HepG2 (cell line): ENCODE measurements at regions of chr11 and their contacts with region 1.

Region 1: DNA sequence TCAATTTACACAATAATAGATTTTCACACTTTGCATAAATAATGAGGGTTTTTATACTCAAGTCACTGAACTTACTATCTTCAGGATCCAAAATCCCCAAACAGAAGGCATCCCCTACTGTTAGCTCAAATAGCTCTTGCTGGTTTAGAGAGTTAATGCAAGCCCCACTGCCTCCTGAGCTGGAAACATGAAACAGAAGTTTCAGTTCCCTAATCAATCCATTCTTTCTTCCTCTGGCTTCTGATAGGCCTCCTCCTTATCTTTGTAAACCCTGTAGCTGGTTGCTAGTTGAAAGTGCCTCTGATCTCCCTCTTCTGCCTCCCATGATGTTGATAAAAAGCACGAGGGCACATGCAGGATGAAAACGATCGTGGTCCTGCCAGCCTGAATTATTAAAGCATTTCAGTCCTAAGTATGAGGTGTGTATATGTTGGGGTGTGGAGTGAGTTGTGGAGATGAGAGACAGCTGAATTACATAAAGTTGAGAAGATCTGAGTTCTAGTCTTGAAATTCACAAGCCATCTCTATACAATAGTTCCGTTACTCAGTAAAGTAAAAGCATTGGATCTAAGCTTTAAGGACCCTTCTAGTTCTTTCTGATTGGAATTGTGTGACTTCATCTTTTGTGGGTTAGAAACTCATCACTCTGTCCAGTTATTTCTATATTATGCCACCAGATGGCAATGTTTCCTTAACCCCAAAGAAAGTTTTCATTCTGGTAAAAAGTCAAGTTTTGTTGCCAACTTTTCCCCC is 35.0 kb upstream of the EHF start:
- DNase-seq: peak; percentile 70
- ATAC-seq: peak; percentile 81
- H3K4me3 ChIP-seq: peak overlapping the region; percentile 10 to 56 (median 48); a peak in 4 of 6 replicates
- H3K27ac ChIP-seq: peak overlapping the region; percentile 51
- H3K4me1 ChIP-seq: peaks cover 40% of the 10 kb centered on the region
- H3K27me3 ChIP-seq: no peaks in the 10 kb centered on the region
- CTCF ChIP-seq: peak; percentile 77
- EP300 ChIP-seq: peak in 1 of 2 experiments; percentile 86; a peak in 1 of 4 replicates
- POLR2A ChIP-seq: no peak
- RAD21 ChIP-seq: peak; percentile 90

Region 2: DNA sequence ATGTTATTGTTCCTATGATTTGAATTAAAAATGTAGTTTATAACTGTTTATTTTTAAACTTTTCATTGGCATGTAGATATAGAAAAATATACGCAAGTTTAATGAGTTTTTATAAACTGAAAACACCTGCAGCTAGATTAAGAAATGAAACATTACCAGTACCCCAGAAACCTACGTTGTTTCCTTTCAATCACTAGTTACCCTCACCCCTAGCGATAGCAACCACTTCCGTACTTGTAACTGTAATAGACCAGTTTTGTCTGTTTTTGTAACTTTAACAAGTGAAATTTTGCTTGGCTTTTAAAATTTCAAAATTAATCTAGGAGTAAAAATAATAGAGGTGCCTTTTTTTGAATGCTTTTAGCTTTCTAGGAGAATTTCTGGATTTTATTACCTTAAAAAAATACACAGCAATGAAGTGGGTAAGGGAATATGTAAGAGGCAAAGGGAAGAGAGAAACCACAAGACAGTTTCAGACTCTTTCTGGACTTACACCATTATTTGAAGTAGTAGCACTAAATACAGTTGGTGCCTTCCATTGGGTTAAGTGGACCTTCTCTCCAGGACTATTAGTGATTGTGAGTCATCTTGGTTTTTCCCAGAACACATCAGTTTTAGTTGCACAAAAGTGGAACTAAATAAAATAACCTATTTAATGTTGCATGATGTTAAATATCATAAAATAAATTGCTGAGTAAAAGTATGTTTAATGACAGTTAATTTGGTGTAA is 499.2 kb before region 1 on chr11:
- CTCF ChIA-PET with region 1: no interaction called
- POLR2A ChIA-PET with region 1: no interaction called
- in situ Hi-C with region 1: no loop called
- intact Hi-C with region 1: no loop called
- DNase-seq: no peak
- ATAC-seq: no peak
- H3K4me3 ChIP-seq: no peak overlapping the region
- H3K27ac ChIP-seq: no peak overlapping the region
- H3K4me1 ChIP-seq: peaks cover 9% of the 10 kb centered on the region
- H3K27me3 ChIP-seq: no peaks in the 10 kb centered on the region
- CTCF ChIP-seq: no peak
- EP300 ChIP-seq: no peak
- POLR2A ChIP-seq: no peak
- RAD21 ChIP-seq: no peak

Region 3: DNA sequence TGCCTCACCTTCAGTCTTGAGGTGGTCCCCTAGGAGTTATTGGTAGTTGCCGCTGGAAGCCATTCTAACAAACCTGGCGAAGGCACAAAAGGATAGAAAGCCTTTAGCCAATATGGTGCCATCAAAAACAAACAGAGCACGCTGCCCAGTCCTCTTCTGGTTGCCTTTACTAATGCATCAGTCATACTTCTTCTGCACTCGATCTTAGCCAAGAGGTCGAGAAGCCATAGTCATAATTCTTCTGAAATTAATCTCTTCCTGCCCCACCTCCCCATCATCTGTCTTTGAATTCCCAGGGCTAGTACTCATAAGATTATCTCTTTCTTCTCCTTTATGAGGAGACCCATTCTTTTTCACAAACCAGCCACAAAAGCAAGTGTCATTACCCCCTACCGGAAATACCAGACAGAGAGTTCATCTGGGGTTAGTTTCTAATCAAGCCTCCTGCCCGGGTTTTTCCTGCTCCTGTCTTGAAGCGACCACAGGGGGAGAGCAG is 13.5 kb after region 1 on chr11:
- CTCF ChIA-PET with region 1: no interaction called
- POLR2A ChIA-PET with region 1: interaction called, 23 read pairs
- in situ Hi-C with region 1: no loop called
- intact Hi-C with region 1: no loop called
- DNase-seq: peak; percentile 79
- ATAC-seq: peak; percentile 1; the same call in 1 of the 3 replicates
- H3K4me3 ChIP-seq: peak overlapping the region; percentile 49 to 67 (median 66)
- H3K27ac ChIP-seq: peak overlapping the region; percentile 95
- H3K4me1 ChIP-seq: peaks cover 86% of the 10 kb centered on the region
- H3K27me3 ChIP-seq: no peaks in the 10 kb centered on the region
- CTCF ChIP-seq: no peak
- EP300 ChIP-seq: peak in 1 of 2 experiments; percentile 52; a peak in 1 of 4 replicates
- POLR2A ChIP-seq: no peak
- RAD21 ChIP-seq: no peak

Region 4: GRCh38 chr11:34783816-34784317 is 198.0 kb after region 1 on chr11:
- CTCF ChIA-PET with region 1: no interaction called
- POLR2A ChIA-PET with region 1: interaction called, 3 read pairs
- in situ Hi-C with region 1: no loop called
- intact Hi-C with region 1: loop called (anchors 2 kb)
- DNase-seq: peak; percentile 98
- ATAC-seq: peak; percentile 96
- H3K4me3 ChIP-seq: peak overlapping the region; percentile 2 to 38 (median 26); a peak in 4 of 6 replicates
- H3K27ac ChIP-seq: peak overlapping the region; percentile 92
- H3K4me1 ChIP-seq: peaks cover 46% of the 10 kb centered on the region
- H3K27me3 ChIP-seq: no peaks in the 10 kb centered on the region
- CTCF ChIP-seq: no peak
- EP300 ChIP-seq: peak in 1 of 2 experiments; percentile 84; a peak in 2 of 4 replicates
- POLR2A ChIP-seq: peak in 1 of 2 experiments; percentile 36; a peak in 1 of 4 replicates
- RAD21 ChIP-seq: no peak

Region 5: GRCh38 chr11:34890812-34891211 is 304.9 kb after region 1 on chr11:
- CTCF ChIA-PET with region 1: interaction called, 56 read pairs
- POLR2A ChIA-PET with region 1: no interaction called
- in situ Hi-C with region 1: loop called (anchors 5 kb)
- intact Hi-C with region 1: loop called (anchors 1 kb)
- DNase-seq: peak; percentile 59
- ATAC-seq: no peak
- H3K4me3 ChIP-seq: no peak overlapping the region
- H3K27ac ChIP-seq: no peak overlapping the region
- H3K4me1 ChIP-seq: peaks cover 22% of the 10 kb centered on the region
- H3K27me3 ChIP-seq: no peaks in the 10 kb centered on the region
- CTCF ChIP-seq: peak; percentile 61
- EP300 ChIP-seq: no peak
- POLR2A ChIP-seq: no peak
- RAD21 ChIP-seq: peak; percentile 51; the same call in 1 of the 2 replicates

Region 6: DNA sequence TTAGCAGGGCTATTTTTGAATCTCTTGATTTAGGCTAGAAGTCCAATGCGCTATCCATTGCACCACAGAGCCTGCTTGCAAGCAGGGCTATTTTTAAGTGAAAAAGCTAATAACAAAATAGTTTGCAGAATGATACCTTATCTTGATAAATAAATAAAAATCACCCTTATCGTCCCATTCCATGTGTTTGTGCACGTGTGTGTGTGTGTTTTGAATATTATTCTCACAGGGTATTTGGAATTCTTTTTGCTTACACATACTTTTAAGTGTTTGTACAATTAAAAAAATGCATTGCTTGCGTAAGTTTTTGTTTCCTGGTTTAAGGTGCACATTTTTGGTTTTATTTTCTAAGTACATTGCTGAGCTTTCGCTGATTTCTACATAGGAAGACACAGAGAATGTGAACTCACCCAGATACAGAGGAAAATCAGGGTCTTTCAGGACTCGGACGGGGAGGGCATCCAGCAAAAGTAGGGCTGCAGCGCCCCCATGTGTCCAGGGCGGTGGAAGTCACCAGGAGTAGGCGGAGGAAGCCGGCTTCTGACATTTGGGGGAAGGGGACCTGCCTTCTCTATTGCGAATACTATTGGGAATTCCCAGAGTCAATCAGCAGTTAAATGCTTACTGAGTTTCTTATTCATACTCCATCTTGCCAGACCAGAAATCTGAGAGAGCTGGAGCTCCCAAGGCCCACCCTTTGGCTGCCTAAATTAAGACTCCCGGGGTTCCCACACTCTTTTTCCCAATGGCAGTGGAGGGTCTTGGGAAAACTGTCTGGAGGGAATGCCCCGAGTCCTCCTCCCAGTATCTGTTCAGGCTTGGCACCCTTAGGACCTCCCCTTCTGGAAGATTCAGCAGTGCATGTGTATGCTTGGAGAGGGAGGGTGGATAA is 806.3 kb after region 1 on chr11:
- CTCF ChIA-PET with region 1: no interaction called
- POLR2A ChIA-PET with region 1: no interaction called
- in situ Hi-C with region 1: loop called (anchors 25 kb)
- intact Hi-C with region 1: loop called (anchors 5 kb)
- DNase-seq: peak; percentile 60
- ATAC-seq: peak; percentile 88
- H3K4me3 ChIP-seq: peak overlapping the region in 2 of 3 experiments; percentile 32 to 34; a peak in 3 of 6 replicates
- H3K27ac ChIP-seq: no peak overlapping the region
- H3K4me1 ChIP-seq: peaks cover 30% of the 10 kb centered on the region
- H3K27me3 ChIP-seq: 0 out of 5 replicates have a peak, but pooled peaks cover 2 to 6% of the 10 kb centered on the region in 2 experiments
- CTCF ChIP-seq: peak; percentile 95
- EP300 ChIP-seq: no peak
- POLR2A ChIP-seq: no peak
- RAD21 ChIP-seq: peak; percentile 91